ENCODE measurements at regions of chr20 and their contacts with region 1.

Region 1: GRCh38 chr20:32585011-32585518 is at the start of gene NOL4L:
- DNase-seq: peak; percentile 85
- H3K4me3 ChIP-seq: peak within 1 kb of the TSS; percentile 69 to 94 (median 80)
- H3K27ac ChIP-seq: peak within 1 kb of the TSS; percentile 57 to 89 (median 78)
- H3K4me1 ChIP-seq: peaks cover 24 to 74% (median 46%) of the 10 kb centered on the region in 6 donors
- H3K27me3 ChIP-seq: peaks cover 0 to 58% (median 6%) of the 10 kb centered on the region in 7 donors
- CTCF ChIP-seq: no peak
- POLR2A ChIP-seq: no peak
- total RNA-seq, gene NOL4L: 25.3 to 45.4 (median 34.9) TPM

Region 2: GRCh38 chr20:32535953-32536823 is 48.9 kb before region 1 on chr20:
- intact Hi-C with region 1: loop called (anchors 10 kb)
- DNase-seq: peak; percentile 94
- H3K4me3 ChIP-seq: peak overlapping the region; percentile 16 to 80 (median 54)
- H3K27ac ChIP-seq: peak overlapping the region; percentile 69 to 93 (median 86)
- H3K4me1 ChIP-seq: peaks cover 40 to 78% (median 66%) of the 10 kb centered on the region in 6 donors
- H3K27me3 ChIP-seq: peaks cover 0 to 9% (median 0%) of the 10 kb centered on the region in 7 donors
- CTCF ChIP-seq: no peak
- POLR2A ChIP-seq: no peak

Region 3: GRCh38 chr20:32638848-32639247 is 53.8 kb after region 1 on chr20:
- intact Hi-C with region 1: no loop called
- DNase-seq: no peak
- H3K4me3 ChIP-seq: no peak overlapping the region
- H3K27ac ChIP-seq: no peak overlapping the region
- H3K4me1 ChIP-seq: peaks cover 0 to 35% (median 18%) of the 10 kb centered on the region in 6 donors
- H3K27me3 ChIP-seq: no peaks in the 10 kb centered on the region
- CTCF ChIP-seq: no peak
- POLR2A ChIP-seq: no peak